MCF 10A (cell line): ENCODE measurements at regions of chr7 and their contacts with region 1.

Region 1: DNA sequence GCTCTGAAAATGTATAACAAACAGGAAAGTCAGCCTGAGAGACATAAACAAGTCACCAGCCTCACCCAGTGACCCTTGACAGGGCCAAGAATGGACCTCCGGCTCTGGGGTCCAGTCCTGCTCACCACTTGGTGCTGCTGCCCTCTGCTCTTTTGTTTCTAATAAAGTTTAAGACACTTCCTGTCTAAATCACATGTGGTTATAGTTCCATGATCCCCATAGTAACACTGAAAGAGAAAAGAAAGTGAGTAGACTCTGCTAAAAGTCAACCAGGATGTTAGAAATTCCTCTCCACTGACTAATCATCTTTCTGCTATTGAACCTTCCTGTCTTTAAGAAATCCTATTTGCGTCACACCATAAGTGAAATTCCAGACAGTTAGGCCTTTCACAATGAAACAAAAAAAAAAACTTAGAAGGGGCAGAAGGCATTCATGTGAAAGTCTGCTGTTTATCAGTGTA is 179.2 kb upstream of the BET1 start:
- DNase-seq: peak; percentile 96
- H3K4me3 Mint-ChIP-seq: peak overlapping the region; percentile 69
- H3K27ac Mint-ChIP-seq: peak overlapping the region; percentile 100
- H3K4me1 Mint-ChIP-seq: peaks cover 19% of the 10 kb centered on the region
- H3K27me3 Mint-ChIP-seq: no peaks in the 10 kb centered on the region
- CTCF ChIP-seq: no peak

Region 2: DNA sequence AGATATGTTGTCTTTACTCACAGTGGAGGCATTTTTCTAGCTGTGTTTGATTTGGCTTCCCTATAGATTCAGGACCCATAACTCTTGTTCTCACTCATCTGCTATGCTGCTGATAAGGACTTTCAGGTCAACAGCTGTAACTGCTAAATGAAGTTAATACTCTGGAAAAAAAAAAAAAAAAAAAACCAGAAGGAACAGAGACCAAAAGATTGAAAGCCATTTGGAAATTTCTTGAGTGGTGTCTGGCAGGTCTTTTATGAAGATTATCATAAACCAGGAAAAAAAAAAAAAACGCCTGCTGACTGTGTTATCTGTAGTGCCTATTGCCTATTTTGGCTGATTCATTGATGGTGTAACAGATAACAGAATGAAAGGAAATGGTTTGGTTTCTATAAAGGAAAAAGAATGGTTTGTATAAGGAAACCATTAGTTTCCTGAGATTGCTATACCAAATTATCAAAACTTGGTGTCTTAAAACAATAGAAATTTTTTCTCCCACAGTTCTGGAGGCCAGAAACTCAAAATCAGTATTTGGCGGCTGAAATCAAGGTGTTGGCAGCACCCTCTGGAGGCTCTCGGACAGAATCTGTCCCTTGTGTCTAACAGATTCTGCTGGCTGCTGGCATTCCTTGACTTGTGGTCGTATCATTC is 118.7 kb before region 1 on chr7:
- CTCF ChIA-PET with region 1: no interaction called
- POLR2A ChIA-PET with region 1: no interaction called
- intact Hi-C with region 1: no loop called
- DNase-seq: no peak
- H3K4me3 Mint-ChIP-seq: no peak overlapping the region
- H3K27ac Mint-ChIP-seq: no peak overlapping the region
- H3K4me1 Mint-ChIP-seq: peaks cover 22% of the 10 kb centered on the region
- H3K27me3 Mint-ChIP-seq: no peaks in the 10 kb centered on the region
- CTCF ChIP-seq: no peak

Region 3: DNA sequence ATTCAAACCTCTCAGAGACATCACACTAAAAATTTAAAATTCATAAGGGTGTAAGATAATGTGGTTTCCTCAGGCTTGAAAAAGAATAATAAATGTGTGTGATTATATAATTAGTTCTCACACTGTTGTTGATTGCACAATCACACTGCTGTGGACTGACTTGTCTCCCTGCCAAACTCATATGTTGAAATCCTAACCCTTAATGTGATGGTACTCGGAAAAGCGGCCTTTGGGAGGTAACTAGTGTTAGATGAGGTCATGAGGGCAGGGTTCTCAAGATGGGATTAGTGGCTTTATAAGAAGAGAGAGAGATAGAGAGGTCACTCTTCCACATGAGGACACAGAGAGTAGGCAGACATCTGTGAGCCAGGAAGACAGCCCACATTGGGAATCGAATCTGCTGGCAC is 82.9 kb after region 1 on chr7:
- CTCF ChIA-PET with region 1: no interaction called
- POLR2A ChIA-PET with region 1: no interaction called
- intact Hi-C with region 1: loop called (anchors 10 kb)
- DNase-seq: peak; percentile 94
- H3K4me3 Mint-ChIP-seq: peak overlapping the region; percentile 5
- H3K27ac Mint-ChIP-seq: no peak overlapping the region
- H3K4me1 Mint-ChIP-seq: peaks cover 9% of the 10 kb centered on the region
- H3K27me3 Mint-ChIP-seq: no peaks in the 10 kb centered on the region
- CTCF ChIP-seq: no peak